ENCODE measurements at regions of chr12 and their contacts with region 1.

Region 1: GRCh38 chr12:51424662-51425438 is at the start of gene SLC4A8:
- DNase-seq: peak; percentile 92 to 97
- H3K4me3 ChIP-seq: peak within 1 kb of the TSS; percentile 66
- H3K4me1 ChIP-seq: peaks cover 7% of the 10 kb centered on the region; the same call in 1 of the 2 replicates
- H3K27me3 ChIP-seq: no peaks in the 10 kb centered on the region

Region 2: GRCh38 chr12:50564237-50564947 is 860.5 kb before region 1 on chr12:
- in situ Hi-C with region 1: no loop called
- DNase-seq: no peak
- H3K4me3 ChIP-seq: no peak overlapping the region
- H3K4me1 ChIP-seq: no peaks in the 10 kb centered on the region
- H3K27me3 ChIP-seq: no peaks in the 10 kb centered on the region

Region 3: DNA sequence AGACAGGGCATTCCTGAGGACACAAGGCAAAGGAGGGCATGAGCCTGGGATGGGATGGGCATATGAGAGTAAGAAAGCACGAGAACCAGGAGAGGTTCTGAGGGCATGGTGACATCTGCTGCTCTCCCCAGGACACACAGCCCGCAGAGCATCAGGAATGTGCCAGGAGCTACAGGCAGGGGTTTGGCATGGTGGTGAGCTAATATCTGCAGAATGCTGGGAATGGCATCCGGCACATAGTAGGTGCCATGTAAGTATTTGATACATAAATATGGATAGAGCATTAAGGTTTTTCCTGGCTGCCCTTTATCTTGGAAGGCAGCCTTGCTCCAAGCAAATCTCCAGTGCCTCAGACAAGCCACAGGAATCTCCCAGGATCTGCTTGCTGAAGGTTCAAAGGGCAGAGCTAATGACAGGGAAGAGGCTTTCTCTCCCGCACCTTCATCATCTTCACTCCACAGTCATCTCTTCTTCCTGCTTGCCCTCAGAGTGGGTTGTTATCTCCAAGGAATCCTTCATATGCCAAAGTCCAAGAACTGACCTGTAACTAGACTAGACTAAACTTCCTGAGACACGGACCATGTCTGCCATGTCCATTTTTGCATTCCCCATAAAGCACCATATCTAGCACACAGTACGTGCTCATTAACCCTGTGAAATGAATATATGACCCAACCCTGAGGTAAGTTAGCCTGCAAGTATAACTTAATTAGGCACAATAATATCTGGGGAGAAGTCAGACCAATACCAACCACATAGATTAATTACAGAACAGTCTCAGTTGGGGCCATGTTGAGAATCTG is 104.2 kb after region 1 on chr12:
- in situ Hi-C with region 1: loop called (anchors 5 kb)
- DNase-seq: no peak
- H3K4me3 ChIP-seq: no peak overlapping the region
- H3K4me1 ChIP-seq: peaks cover 5% of the 10 kb centered on the region
- H3K27me3 ChIP-seq: peaks cover 2% of the 10 kb centered on the region; the same call in 1 of the 2 replicates

Region 4: GRCh38 chr12:51678086-51678724 is 253.4 kb after region 1 on chr12:
- in situ Hi-C with region 1: loop called (anchors 10 kb)
- DNase-seq: peak; percentile 69 to 76
- H3K4me3 ChIP-seq: no peak overlapping the region
- H3K4me1 ChIP-seq: peaks cover 24% of the 10 kb centered on the region
- H3K27me3 ChIP-seq: no peaks in the 10 kb centered on the region

Region 5: DNA sequence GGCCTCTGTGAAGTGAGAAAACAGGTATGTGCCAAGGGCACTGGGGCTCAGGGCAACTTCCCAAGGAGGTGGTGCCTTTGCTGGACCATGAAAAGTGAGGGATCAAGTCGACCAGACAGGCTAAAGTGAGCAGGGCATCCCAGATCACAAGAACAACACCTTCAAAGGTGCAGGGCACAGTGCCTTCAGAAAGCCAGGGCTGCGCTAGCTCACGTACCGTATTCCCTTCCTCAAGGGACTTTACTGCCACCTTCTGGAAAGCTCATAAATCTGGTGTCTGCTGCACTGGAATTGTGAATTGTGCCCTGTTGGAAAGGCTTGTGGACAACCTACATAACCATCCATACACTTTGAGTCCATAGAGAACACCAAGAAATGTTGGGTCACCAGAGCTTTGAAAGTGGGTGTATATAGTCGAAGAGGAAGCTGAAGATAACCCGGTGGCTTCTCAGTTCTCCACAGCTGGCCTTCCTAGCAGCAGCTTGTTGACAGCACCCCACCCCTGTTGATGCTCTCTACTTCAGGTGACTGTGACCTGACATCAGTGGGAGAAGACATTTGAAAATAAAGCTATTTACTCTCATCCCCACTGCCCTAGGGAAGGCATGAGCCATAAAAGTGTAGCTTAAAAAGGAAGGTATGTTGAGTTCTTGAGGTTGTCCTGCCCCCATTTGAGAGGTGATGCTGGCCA is 399.2 kb after region 1 on chr12:
- in situ Hi-C with region 1: loop called (anchors 10 kb)
- DNase-seq: peak; percentile 55 to 75
- H3K4me3 ChIP-seq: no peak overlapping the region
- H3K4me1 ChIP-seq: no peaks in the 10 kb centered on the region; the same call in none of the 2 replicates
- H3K27me3 ChIP-seq: no peaks in the 10 kb centered on the region

Region 6: DNA sequence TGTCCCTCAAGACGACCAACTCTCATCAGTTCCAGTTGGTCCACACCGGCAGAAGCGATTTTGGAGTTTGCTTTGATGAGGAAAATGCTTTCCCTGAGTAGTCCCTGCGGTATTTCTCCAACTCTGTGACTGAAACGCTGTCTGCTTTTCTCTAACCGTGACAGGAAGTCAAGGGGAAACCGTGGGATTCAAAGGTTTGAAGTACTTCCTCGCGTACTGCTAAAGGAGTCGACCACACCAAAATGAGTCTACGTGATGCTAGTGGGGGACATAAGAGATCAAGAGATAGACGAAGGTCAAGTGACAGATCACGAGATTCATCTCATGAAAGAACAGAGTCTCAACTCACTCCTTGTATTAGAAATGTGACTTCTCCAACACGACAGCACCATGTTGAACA is 1323.7 kb after region 1 on chr12:
- in situ Hi-C with region 1: no loop called
- DNase-seq: no peak
- H3K4me3 ChIP-seq: no peak overlapping the region
- H3K4me1 ChIP-seq: no peaks in the 10 kb centered on the region
- H3K27me3 ChIP-seq: peaks cover 12% of the 10 kb centered on the region; the same call in 1 of the 2 replicates

Measured in HAP-1 (cell line).